ENCODE measurements at regions of chr10 and their contacts with region 1.

Region 1: GRCh38 chr10:119139464-119140067 is 25.9 kb downstream of the SFXN4 start:
- DNase-seq: peak in 1 of 2 experiments; percentile 12
- H3K4me3 ChIP-seq: no peak overlapping the region
- H3K27ac ChIP-seq: no peak overlapping the region
- H3K4me1 ChIP-seq: no peaks in the 10 kb centered on the region
- H3K27me3 ChIP-seq: no peaks in the 10 kb centered on the region
- CTCF ChIP-seq: peak; percentile 50

Region 2: DNA sequence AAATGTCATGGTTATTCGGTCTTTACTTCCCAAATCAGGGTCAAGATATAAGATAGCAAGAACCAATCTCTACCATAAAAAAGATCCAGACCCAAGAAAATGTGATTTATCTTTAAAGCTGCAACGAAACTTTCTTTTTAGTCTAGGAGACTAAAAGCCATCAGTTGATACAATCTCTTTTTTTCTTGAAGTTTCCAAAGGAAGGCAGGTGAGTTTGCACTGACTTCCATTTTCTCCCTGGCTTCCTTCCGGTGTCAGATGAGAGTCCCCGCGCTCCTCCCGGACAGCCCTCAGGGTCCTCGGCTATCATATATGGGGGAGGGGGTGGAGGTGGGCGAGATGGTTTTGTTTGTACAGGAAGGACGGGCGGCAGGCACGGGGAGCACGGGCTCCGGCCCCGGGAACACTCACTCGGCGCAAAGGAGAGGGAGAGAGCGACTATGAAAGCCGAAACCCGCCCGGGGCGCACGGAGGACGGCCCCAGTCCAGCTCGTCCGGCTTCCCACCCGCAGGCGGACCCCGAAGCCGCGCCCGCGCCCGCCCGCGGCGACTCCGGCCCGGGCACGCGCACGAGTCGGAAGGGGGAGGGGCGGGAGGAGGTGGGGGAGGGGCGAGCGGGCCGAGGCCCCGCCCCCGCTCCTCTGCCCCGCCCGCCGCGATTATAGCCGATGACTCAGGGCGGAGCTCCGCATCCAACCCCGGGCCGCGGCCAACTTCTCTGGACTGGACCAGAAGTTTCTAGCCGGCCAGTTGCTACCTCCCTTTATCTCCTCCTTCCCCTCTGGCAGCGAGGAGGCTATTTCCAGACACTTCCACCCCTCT is 511.3 kb after region 1 on chr10 and contains the start of gene BAG3:
- CTCF ChIA-PET with region 1: no interaction called
- POLR2A ChIA-PET with region 1: no interaction called
- intact Hi-C with region 1: no loop called
- DNase-seq: peak; percentile 73 to 78
- H3K4me3 ChIP-seq: peak within 1 kb of the TSS; percentile 87
- H3K27ac ChIP-seq: peak within 1 kb of the TSS; percentile 75
- H3K4me1 ChIP-seq: peaks cover 32% of the 10 kb centered on the region
- H3K27me3 ChIP-seq: no peaks in the 10 kb centered on the region
- CTCF ChIP-seq: no peak
- total RNA-seq, gene BAG3: 62.7 and 75.7 TPM in 2 replicates

Region 3: GRCh38 chr10:119784340-119785070 is 644.9 kb after region 1 on chr10:
- CTCF ChIA-PET with region 1: no interaction called
- POLR2A ChIA-PET with region 1: no interaction called
- intact Hi-C with region 1: no loop called
- DNase-seq: no peak
- H3K4me3 ChIP-seq: no peak overlapping the region
- H3K27ac ChIP-seq: no peak overlapping the region
- H3K4me1 ChIP-seq: no peaks in the 10 kb centered on the region
- H3K27me3 ChIP-seq: no peaks in the 10 kb centered on the region
- CTCF ChIP-seq: no peak

Region 4: DNA sequence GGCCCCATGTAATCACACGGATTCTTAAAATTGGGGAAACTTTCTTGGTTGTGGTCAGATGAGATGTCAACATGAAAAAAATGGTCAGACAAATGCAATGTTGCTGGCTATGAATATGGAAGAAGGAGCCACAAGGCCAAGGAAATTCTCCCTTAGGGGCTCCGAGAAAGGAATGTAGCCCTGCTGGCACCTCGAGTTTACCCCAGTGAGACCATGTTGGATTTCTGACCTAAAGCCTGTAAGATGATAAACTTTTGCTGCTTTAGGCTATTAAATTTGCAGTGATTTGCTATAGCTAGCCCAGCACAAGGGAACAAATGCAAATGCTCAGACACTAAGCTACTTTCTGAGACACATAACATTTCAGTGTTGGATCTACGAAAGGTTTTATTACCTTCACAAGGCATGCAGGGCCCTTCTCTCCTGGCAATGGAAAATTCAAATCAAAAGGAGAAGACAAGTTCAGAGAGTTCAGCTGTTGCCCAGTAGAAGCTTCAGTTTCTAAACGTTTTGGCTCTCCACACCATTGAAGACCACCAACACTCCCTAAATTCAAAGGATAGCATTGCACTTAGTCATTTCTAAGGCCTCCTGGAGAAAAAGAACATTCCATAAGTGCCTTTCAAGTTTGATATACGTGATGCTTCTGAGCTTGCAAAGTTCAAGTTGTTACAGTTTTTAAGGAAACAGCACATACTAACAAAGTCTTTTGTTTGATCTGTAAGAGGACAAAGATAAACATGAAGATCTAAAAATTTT is 709.6 kb after region 1 on chr10:
- CTCF ChIA-PET with region 1: no interaction called
- POLR2A ChIA-PET with region 1: interaction called, 13 read pairs
- intact Hi-C with region 1: no loop called
- DNase-seq: peak; percentile 22 to 40
- H3K4me3 ChIP-seq: no peak overlapping the region
- H3K27ac ChIP-seq: 0 out of 2 replicates have a peak overlapping the region, but pooled peaks have one; percentile 37
- H3K4me1 ChIP-seq: no peaks in the 10 kb centered on the region
- H3K27me3 ChIP-seq: no peaks in the 10 kb centered on the region
- CTCF ChIP-seq: no peak

Region 5: DNA sequence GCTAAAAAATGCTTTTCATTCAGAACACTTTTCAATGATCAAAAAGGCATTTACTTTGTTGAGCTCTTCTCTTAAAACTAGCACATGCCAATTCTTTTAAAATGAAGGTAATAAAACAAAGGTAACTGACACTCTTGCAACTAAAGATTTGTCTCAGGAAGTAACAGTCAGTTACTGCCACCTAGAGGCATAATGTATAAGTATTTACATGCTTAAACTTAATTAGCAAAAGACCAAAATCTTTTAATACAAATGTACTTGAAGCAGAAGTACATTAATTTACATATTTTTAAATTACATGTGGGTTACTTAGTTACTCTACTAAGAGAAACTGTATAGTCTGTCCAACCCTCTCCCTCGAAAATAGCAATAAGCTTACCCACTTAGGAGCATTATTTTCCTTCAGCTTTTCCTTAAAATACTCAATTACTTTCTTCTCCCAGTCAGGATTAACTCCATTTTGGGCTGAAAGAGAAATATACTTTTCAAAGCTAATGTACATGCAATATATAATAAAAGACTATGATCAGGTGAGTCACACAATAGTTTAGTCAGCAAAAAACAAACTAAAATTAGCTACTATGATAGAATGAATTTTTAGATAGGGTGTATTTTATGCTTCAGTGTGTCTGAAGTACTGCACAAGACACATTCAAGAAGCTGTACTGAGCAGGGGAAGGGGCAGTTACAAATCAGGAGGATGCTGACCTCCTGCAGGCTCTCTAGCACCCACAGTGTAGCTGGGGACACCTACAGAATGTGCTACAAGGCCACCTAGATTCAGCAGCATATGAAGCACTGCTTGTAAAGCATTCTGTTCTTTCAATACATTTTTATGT is 720.1 kb after region 1 on chr10:
- CTCF ChIA-PET with region 1: interaction called, 12 read pairs
- POLR2A ChIA-PET with region 1: no interaction called
- intact Hi-C with region 1: no loop called
- DNase-seq: no peak
- H3K4me3 ChIP-seq: no peak overlapping the region
- H3K27ac ChIP-seq: peak overlapping the region; percentile 19; the same call in 1 of the 2 replicates
- H3K4me1 ChIP-seq: no peaks in the 10 kb centered on the region
- H3K27me3 ChIP-seq: no peaks in the 10 kb centered on the region
- CTCF ChIP-seq: peak; percentile 76

Region 6: GRCh38 chr10:120336911-120337540 is 1197.5 kb after region 1 on chr10:
- CTCF ChIA-PET with region 1: no interaction called
- POLR2A ChIA-PET with region 1: no interaction called
- intact Hi-C with region 1: loop called (anchors 10 kb)
- DNase-seq: peak in 1 of 2 experiments; percentile 24
- H3K4me3 ChIP-seq: no peak overlapping the region
- H3K27ac ChIP-seq: no peak overlapping the region
- H3K4me1 ChIP-seq: no peaks in the 10 kb centered on the region
- H3K27me3 ChIP-seq: 0 out of 2 replicates have a peak, but pooled peaks cover 5% of the 10 kb centered on the region
- CTCF ChIP-seq: peak; percentile 69

Measured in PC-9 (cell line).